ENCODE measurements at regions of chr17 and their contacts with region 1.

Region 1: DNA sequence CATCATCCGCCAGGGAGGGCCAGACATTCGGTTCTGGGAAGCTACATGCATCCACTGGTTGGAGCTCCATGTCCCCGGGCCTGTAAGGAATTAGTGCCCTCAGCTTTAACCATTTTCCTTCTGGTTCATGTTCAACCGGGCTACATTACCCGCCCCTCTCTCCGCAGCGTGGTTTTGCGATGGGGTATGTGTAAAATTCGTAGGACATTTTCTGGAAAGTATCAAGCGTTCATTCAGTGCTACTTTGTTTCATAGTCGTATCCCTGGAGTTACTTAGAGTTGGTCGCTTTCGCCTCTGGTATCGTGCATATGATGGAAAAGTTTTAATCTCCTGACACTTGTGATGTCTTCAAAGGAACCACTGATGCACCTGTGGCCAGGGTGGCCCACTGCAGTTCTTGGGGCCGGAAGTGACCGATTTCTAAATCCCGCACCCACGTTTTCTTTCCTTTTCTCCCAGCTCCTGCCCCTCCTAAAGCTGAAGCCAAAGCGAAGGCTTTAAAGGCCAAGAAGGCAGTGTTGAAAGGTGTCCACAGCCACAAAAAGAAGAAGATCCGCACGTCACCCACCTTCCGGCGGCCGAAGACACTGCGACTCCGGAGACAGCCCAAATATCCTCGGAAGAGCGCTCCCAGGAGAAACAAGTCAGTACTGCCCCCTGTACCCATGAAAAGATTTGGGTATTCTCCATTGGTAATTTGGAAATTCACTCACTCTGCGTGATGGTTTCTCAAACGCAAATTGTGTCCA is 637 bp downstream of the RPL23A start:
- DNase-seq: no peak
- ATAC-seq: no peak
- H3K4me3 ChIP-seq: peak overlapping the region; percentile 62 to 87 (median 78)
- H3K27ac ChIP-seq: peak overlapping the region; percentile 17 to 80 (median 77)
- H3K4me1 ChIP-seq: peaks cover 11 to 31% (median 18%) of the 10 kb centered on the region in 3 donors
- H3K27me3 ChIP-seq: no peaks in the 10 kb centered on the region
- CTCF ChIP-seq: no peak

Region 2: DNA sequence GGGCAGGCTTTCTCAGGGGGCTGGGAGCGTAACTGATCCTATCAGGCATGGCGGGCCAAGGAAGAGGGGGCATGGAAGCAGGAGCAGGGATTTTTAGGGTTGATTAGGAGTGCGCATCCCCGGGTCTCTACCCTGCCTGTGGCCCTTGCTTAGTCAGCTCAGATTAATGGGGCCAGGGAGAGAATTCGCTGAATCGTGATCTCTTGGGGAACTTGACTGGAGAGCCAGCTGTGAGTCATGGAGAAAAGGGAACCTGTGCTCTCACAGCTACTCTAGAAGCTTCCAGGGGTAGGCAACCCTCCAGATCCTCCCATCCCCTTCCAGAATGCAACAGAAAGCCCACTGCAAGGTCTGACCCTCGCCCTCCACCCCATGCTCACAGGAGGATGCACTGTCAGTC is 210.6 kb before region 1 on chr17:
- intact Hi-C with region 1: no loop called
- DNase-seq: no peak
- ATAC-seq: peak in 2 of 4 donors; percentile 44 to 72
- H3K4me3 ChIP-seq: no peak overlapping the region
- H3K27ac ChIP-seq: no peak overlapping the region
- H3K4me1 ChIP-seq: no peaks in the 10 kb centered on the region
- H3K27me3 ChIP-seq: no peaks in the 10 kb centered on the region
- CTCF ChIP-seq: no peak

Region 3: DNA sequence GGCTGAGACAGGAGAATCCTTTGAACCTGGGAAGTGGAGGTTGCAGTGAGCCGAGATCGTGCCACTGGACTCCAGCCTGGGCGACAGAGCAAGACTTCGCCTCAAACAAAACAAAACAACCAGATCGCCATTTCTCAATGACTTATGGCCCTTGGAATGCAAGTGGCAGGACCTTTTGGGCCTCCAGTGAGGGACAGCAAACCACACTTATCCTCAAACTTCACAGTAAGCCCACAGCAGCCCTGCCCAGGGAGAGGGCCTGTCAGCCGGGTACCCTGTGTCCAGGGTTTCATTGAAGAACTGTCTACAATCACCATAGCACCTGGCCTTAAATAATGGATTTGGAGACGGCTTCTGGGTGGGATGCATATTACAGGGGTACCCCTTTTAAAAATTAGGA is 35.1 kb after region 1 on chr17:
- intact Hi-C with region 1: loop called in 1 of 3 experiments (anchors 5 kb)
- DNase-seq: peak in 1 of 6 donors; percentile 22
- ATAC-seq: no peak
- H3K4me3 ChIP-seq: no peak overlapping the region
- H3K27ac ChIP-seq: no peak overlapping the region
- H3K4me1 ChIP-seq: peaks cover 0 to 4% (median 0%) of the 10 kb centered on the region in 3 donors
- H3K27me3 ChIP-seq: no peaks in the 10 kb centered on the region
- CTCF ChIP-seq: no peak

Measured in pancreas (tissue), 10 donors.